Transverse colon (tissue), 4 donors: ENCODE measurements at regions of chr16 and their contacts with region 1.

Region 1: GRCh38 chr16:25606069-25606468 is 85.7 kb upstream of the HS3ST4 start:
- DNase-seq: no peak
- H3K4me3 ChIP-seq: no peak overlapping the region
- H3K27ac ChIP-seq: no peak overlapping the region
- H3K4me1 ChIP-seq: no peaks in the 10 kb centered on the region
- H3K27me3 ChIP-seq: no peaks in the 10 kb centered on the region
- CTCF ChIP-seq: no peak
- EP300 ChIP-seq: no peak
- POLR2A ChIP-seq: no peak

Region 2: DNA sequence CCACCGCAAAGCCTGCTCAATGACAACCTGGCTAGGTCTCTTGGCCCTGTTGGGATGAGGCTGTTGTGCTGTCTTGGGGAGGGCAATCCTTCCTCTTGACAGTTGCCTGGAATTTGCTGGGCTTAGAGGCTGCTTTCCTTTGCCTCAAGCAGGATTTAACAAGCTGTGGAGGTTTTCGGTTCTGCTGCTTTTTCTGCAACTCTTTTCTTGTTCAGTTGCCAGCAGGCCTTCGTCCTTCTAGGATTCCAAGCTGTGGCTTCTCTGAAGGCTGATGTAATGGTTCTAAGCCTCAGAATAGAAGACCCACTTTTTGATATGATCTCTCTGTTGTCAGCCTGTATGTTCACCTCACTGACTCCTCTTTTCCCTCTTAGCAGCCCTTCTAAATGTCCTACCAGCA is 63.8 kb before region 1 on chr16:
- in situ Hi-C with region 1: no loop called
- intact Hi-C with region 1: loop called (anchors 10 kb)
- DNase-seq: no peak
- H3K4me3 ChIP-seq: no peak overlapping the region
- H3K27ac ChIP-seq: no peak overlapping the region
- H3K4me1 ChIP-seq: no peaks in the 10 kb centered on the region
- H3K27me3 ChIP-seq: no peaks in the 10 kb centered on the region
- CTCF ChIP-seq: no peak
- EP300 ChIP-seq: no peak
- POLR2A ChIP-seq: no peak